GM12878 (cell line): ENCODE measurements at regions of chr6 and their contacts with region 1.

Region 1: DNA sequence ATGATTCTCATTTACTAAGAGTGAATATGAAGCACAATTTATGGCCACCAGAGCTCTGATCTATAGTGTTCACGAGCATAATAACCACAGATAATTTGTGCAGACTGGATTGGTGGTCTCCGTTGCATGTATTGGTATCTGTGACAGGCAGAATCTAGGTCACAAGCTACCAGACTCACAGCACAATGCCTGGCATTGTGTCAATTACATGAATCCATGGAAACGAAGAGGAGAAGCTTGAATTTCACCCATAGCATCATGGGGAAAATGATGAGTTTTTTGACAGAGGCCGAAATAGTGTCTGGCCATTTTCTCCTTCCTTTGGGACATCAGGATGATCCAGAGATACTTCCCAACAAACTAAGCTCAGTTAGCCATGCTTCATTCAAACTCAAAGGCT is 52.3 kb upstream of the TMEM170B start:
- DNase-seq: no peak
- ATAC-seq: no peak
- H3K4me3 ChIP-seq: no peak overlapping the region
- H3K27ac ChIP-seq: no peak overlapping the region
- H3K4me1 ChIP-seq: no peaks in the 10 kb centered on the region
- H3K27me3 ChIP-seq: no peaks in the 10 kb centered on the region
- CTCF ChIP-seq: no peak
- EP300 ChIP-seq: no peak
- POLR2A ChIP-seq: no peak
- RAD21 ChIP-seq: no peak

Region 2: DNA sequence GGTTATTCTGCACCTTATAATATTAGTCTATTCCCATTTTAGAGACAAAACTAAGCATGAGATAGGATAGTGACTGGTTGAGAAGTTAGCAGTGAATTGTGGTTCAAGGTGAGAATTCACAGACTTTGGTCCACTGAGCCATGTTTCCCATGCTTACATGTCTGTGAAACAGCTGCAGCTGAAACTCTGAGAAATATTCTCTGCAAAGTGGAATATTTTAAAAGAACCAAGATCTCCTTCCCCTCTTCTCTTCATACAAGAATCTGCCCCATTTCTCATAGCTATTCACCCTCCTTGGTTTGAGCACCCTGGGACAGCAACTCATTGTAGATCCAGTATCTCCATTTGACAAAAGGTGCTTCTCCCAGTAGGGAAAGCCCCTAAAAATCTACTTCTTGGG is 17.9 kb before region 1 on chr6:
- CTCF ChIA-PET with region 1: interaction called, 3 read pairs
- POLR2A ChIA-PET with region 1: no interaction called
- RAD21 ChIA-PET with region 1: interaction called, 4 read pairs
- SMC1A ChIA-PET with region 1: interaction called, 21 read pairs
- in situ Hi-C with region 1: no loop called
- intact Hi-C with region 1: no loop called
- DNase-seq: peak; percentile 88
- ATAC-seq: peak; percentile 82
- H3K4me3 ChIP-seq: no peak overlapping the region
- H3K27ac ChIP-seq: peak overlapping the region; percentile 91
- H3K4me1 ChIP-seq: peaks cover 30% of the 10 kb centered on the region
- H3K27me3 ChIP-seq: no peaks in the 10 kb centered on the region
- CTCF ChIP-seq: no peak
- EP300 ChIP-seq: no peak
- POLR2A ChIP-seq: no peak
- RAD21 ChIP-seq: peak; percentile 25

Region 3: GRCh38 chr6:11473008-11473740 is 12.1 kb before region 1 on chr6:
- CTCF ChIA-PET with region 1: interaction called, 4 read pairs
- POLR2A ChIA-PET with region 1: interaction called, 3 read pairs
- RAD21 ChIA-PET with region 1: no interaction called
- SMC1A ChIA-PET with region 1: interaction called, 21 read pairs
- in situ Hi-C with region 1: no loop called
- intact Hi-C with region 1: no loop called
- DNase-seq: no peak
- ATAC-seq: no peak
- H3K4me3 ChIP-seq: no peak overlapping the region
- H3K27ac ChIP-seq: no peak overlapping the region
- H3K4me1 ChIP-seq: peaks cover 17% of the 10 kb centered on the region
- H3K27me3 ChIP-seq: no peaks in the 10 kb centered on the region
- CTCF ChIP-seq: no peak
- EP300 ChIP-seq: no peak
- POLR2A ChIP-seq: no peak
- RAD21 ChIP-seq: no peak